ENCODE measurements at regions of chr9 and their contacts with region 1.

Region 1: DNA sequence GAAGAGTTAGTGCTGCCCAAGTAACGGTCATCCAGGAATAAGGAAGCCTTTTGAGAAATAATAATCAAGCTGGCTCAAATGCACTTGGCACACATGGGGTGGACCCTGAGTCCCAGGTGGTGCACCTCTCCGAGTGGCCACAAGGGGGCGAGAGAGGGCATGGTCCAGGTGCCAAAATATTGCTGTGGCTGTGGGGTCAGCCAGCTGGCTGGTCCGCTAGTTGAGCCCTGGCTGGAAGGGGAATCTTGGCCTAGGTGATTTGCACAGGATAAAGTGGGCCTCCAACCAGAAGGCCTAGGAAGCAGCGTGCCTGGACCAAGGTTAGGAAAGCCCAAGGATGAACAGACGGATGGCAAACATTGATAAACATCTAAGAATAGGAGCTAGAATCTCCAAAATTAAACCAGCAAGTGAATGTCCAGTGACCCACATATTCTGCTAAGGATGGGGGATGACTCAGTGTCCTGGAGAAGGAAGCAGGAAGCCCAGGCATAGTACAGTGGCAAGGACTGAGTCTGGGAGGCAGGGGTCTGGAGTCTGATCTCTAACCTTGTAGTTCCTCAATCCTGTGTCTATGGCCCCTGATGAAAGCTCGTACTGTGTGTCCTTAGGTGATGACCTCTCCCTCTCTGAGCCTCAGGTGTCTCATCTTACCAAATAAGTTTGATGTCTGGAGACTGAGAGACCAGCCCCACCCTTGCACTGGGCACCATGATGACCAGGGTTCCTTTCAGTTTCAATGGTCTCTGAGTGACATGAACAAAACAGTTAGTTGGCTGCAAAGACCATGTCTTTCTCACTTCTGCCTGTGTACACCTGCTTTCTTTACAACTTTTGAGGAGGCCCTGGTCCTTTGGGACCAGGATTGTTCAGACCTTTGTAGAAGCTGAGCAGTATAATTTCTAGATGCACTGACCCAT is 19.2 kb upstream of the SHB start:
- DNase-seq: peak; percentile 74
- CTCF ChIP-seq: peak; percentile 96

Region 2: DNA sequence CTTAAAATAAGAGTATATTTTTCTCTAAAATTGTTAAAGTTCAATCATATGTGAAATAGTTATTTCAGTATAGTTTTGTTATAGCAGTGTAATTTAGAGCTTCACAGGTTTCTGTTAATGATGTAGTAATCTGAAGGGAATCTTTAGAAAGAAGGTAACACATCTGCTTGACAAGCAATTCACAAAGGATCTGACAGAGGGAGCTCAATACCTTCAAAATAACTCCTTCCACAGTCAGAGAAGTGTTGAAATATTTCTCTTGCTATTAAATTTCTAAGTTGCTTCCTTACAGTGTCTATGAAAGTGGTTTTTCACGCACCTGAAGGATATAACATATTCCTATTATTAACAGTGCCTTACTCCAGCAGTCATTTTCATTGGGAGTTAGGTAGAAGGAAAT is 229.2 kb before region 1 on chr9:
- CTCF ChIA-PET with region 1: no interaction called
- POLR2A ChIA-PET with region 1: no interaction called
- DNase-seq: no peak
- CTCF ChIP-seq: no peak

Region 3: GRCh38 chr9:37913480-37914153 is 174.6 kb before region 1 on chr9:
- CTCF ChIA-PET with region 1: interaction called, 24 read pairs
- POLR2A ChIA-PET with region 1: no interaction called
- DNase-seq: peak; percentile 85
- CTCF ChIP-seq: peak; percentile 94

Region 4: GRCh38 chr9:38061326-38061977 is 26.8 kb before region 1 on chr9:
- CTCF ChIA-PET with region 1: interaction called, 22 read pairs
- POLR2A ChIA-PET with region 1: interaction called, 3 read pairs
- DNase-seq: peak; percentile 64
- CTCF ChIP-seq: no peak

Region 5: GRCh38 chr9:38107811-38108304 is 19.6 kb after region 1 on chr9:
- CTCF ChIA-PET with region 1: interaction called, 22 read pairs
- POLR2A ChIA-PET with region 1: no interaction called
- DNase-seq: no peak
- CTCF ChIP-seq: no peak

Region 6: DNA sequence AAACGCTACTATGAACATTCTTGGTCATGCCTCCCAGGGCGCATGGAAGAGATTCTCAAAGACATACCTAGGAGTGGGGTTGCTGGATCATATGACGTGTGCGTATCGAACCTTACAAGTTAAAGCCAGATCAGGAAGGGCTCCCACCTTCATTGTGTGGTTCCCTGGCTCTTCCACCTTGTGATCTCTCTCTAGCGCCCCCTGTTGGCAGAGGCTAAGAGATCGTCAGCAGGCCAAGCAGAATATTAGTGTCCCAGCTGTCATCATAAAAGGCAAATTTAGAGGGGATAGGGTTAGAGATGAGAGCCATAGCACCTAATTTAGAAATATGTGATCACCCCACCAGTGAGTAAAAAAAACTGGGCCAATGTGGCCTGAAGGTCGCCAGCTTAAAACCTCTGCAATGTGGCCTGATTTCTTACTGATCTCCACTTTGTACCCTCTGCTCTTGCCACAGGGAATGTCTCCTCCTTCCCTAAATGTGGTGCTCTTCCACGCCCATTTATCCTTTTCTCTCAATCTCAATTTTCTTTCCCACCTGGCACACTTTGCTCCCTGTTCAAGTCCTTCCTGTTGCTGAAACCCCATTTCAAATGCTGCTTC is 72.4 kb after region 1 on chr9:
- CTCF ChIA-PET with region 1: interaction called, 33 read pairs
- POLR2A ChIA-PET with region 1: no interaction called
- DNase-seq: peak; percentile 69
- CTCF ChIP-seq: peak; percentile 86

Measured in GM10248 (cell line).